WTC11 (cell line): ENCODE measurements at regions of chr21 and their contacts with region 1.

Region 1: GRCh38 chr21:34129039-34129891 is 55.9 kb downstream of the MRPS6 start:
- DNase-seq: no peak
- ATAC-seq: peak; percentile 77
- H3K4me3 Mint-ChIP-seq: peak overlapping the region; percentile 37
- H3K27ac Mint-ChIP-seq: peak overlapping the region; percentile 60
- H3K4me1 Mint-ChIP-seq: peaks cover 81% of the 10 kb centered on the region
- H3K27me3 Mint-ChIP-seq: no peaks in the 10 kb centered on the region
- CTCF ChIP-seq: no peak

Region 2: GRCh38 chr21:33964706-33965325 is 164.4 kb before region 1 on chr21:
- CTCF ChIA-PET with region 1: no interaction called
- POLR2A ChIA-PET with region 1: no interaction called
- DNase-seq: no peak
- ATAC-seq: no peak
- H3K4me3 Mint-ChIP-seq: no peak overlapping the region
- H3K27ac Mint-ChIP-seq: no peak overlapping the region
- H3K4me1 Mint-ChIP-seq: peaks cover 11% of the 10 kb centered on the region
- H3K27me3 Mint-ChIP-seq: no peaks in the 10 kb centered on the region
- CTCF ChIP-seq: no peak

Region 3: DNA sequence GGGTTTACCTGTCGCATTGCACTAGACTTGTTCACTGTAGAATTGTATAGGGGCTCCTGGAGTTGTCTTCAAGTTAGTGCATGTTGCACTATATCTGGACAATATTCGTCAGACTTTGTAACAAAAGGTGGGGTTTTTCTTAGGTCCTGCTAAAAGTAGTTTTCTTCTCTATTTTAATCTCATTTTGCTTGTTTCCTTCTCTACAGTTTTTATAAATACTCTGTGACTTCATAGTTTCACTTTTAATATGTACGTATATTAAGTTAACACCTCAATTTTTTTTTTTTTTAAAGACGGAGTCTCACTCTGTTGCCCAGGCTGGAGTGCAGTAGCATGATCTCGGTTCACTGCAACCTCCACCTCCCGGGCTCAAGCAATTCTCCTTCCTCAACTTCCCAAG is 82.3 kb before region 1 on chr21:
- CTCF ChIA-PET with region 1: no interaction called
- POLR2A ChIA-PET with region 1: no interaction called
- DNase-seq: no peak
- ATAC-seq: no peak
- H3K4me3 Mint-ChIP-seq: no peak overlapping the region
- H3K27ac Mint-ChIP-seq: no peak overlapping the region
- H3K4me1 Mint-ChIP-seq: no peaks in the 10 kb centered on the region
- H3K27me3 Mint-ChIP-seq: no peaks in the 10 kb centered on the region
- CTCF ChIP-seq: no peak

Region 4: GRCh38 chr21:34202553-34203372 is 73.5 kb after region 1 on chr21:
- CTCF ChIA-PET with region 1: interaction called, 17 read pairs
- POLR2A ChIA-PET with region 1: no interaction called
- DNase-seq: peak; percentile 63
- ATAC-seq: peak; percentile 58
- H3K4me3 Mint-ChIP-seq: peak overlapping the region; percentile 76
- H3K27ac Mint-ChIP-seq: peak overlapping the region; percentile 96
- H3K4me1 Mint-ChIP-seq: peaks cover 73% of the 10 kb centered on the region
- H3K27me3 Mint-ChIP-seq: no peaks in the 10 kb centered on the region; the same call in 1 of the 2 replicates
- CTCF ChIP-seq: no peak